ENCODE measurements at regions of chr14 and their contacts with region 1.

Region 1: GRCh38 chr14:103984196-103984595 is 41.9 kb upstream of the RD3L start:
- H3K4me3 Mint-ChIP-seq: no peak overlapping the region
- H3K27ac Mint-ChIP-seq: no peak overlapping the region
- H3K4me1 Mint-ChIP-seq: peaks cover 5% of the 10 kb centered on the region
- H3K27me3 Mint-ChIP-seq: peaks cover 2% of the 10 kb centered on the region

Region 2: DNA sequence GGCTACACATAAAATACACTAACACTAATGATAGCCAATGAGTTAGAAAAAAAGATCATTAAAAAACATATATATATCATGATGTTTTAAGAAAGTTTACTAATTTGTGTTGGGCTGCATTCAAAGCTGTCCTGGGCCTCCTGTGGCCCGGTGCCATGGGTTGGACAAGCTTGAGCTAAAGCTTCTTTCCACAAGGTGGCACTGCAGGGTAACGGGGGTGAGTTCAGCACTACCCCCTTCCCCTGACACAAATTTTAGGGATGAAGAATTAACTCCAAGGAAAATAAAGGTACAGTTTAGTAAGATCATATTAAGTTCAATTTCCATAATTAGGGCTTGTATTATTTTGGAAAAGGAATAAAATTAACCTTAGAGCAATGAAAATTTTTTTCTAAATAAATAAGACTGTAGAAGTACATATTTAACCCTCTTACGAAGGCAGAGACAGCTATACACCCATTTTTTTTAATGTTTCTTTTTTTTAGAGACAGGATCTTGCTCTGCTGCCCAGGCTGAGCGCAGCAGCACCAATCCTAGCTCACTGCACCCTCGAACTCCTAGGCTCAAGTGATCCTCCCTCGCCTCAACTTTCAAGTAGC is 175.7 kb before region 1 on chr14:
- intact Hi-C with region 1: loop called (anchors 1 kb)
- H3K4me3 Mint-ChIP-seq: no peak overlapping the region
- H3K27ac Mint-ChIP-seq: no peak overlapping the region
- H3K4me1 Mint-ChIP-seq: no peaks in the 10 kb centered on the region
- H3K27me3 Mint-ChIP-seq: peaks cover 14% of the 10 kb centered on the region

Region 3: GRCh38 chr14:103899833-103900232 is 84.4 kb before region 1 on chr14:
- intact Hi-C with region 1: loop called (anchors 2 kb)
- H3K4me3 Mint-ChIP-seq: no peak overlapping the region
- H3K27ac Mint-ChIP-seq: no peak overlapping the region
- H3K4me1 Mint-ChIP-seq: peaks cover 5% of the 10 kb centered on the region
- H3K27me3 Mint-ChIP-seq: peaks cover 9% of the 10 kb centered on the region

Region 4: DNA sequence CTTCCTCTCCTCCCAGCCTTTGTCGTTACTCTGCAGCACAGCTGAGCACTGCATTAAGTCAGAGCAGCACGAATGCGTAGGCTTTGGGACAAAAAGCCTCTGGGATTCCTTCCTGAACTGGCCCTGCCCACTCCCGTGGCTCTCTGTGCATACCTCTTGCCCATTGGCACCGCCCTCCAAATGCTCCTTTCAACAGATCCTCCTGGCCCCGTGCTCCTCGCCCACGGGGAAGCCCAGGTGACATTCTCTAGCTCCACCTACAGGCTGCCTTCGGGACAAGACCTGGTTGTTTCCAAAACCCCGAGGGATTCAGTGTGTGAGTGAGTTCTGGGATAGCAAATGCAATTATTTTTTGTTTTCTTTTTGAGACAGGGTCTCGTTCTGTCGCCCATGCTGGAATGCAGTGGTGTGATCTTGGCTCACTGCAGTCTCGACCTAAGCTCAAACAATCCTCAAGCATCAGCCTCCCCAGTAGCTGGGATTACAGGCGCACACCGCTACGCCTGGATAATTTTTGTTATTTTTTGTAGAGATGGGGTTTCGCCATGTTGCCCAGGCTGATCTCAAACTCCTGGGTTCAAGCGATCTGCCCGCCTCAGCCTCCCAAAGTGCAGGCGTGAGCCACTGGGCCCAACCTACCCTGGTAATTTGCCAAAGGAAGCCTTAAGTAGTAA is 73.8 kb before region 1 on chr14:
- intact Hi-C with region 1: no loop called
- H3K4me3 Mint-ChIP-seq: peak overlapping the region; percentile 11
- H3K27ac Mint-ChIP-seq: no peak overlapping the region
- H3K4me1 Mint-ChIP-seq: peaks cover 14% of the 10 kb centered on the region
- H3K27me3 Mint-ChIP-seq: peaks cover 3% of the 10 kb centered on the region